ENCODE measurements at regions of chr9 and their contacts with region 1.

Region 1: DNA sequence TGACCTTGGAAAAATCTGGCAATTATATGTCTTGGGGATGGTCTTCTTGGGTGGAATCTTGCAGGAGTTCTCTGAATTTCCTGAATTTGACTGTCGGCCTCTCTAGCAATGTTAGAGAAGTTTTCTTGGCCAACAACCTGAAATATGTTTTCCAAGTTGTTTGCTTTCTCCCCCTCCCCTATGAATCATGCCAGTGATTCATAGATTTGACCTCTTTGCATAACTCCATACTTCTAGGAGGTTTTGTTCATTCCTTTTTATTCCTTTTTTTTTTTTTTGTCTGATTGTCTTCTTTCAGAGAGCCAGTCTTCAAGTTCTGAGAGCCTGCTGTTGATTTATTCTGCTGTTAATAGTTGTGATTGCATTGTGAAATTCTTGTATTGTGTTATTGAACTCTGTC is 56.7 kb upstream of the SLC44A1 start:
- DNase-seq: no peak
- ATAC-seq: peak in 1 of 8 donors; percentile 55
- H3K4me3 ChIP-seq: no peak overlapping the region
- H3K27ac ChIP-seq: no peak overlapping the region
- H3K4me1 ChIP-seq: peaks cover 0 to 19% (median 0%) of the 10 kb centered on the region in 9 donors
- H3K27me3 ChIP-seq: peaks cover 0 to 6% (median 0%) of the 10 kb centered on the region in 7 donors
- CTCF ChIP-seq: no peak

Region 2: GRCh38 chr9:105238302-105238701 is 50.5 kb after region 1 on chr9:
- intact Hi-C with region 1: loop called in 1 of 10 experiments (anchors 5 kb)
- DNase-seq: no peak
- ATAC-seq: no peak
- H3K4me3 ChIP-seq: no peak overlapping the region
- H3K27ac ChIP-seq: no peak overlapping the region
- H3K4me1 ChIP-seq: peaks cover 0 to 29% (median 21%) of the 10 kb centered on the region in 9 donors
- H3K27me3 ChIP-seq: no peaks in the 10 kb centered on the region
- CTCF ChIP-seq: no peak